Ascending aorta (tissue), 2 donors: ENCODE measurements at regions of chr18 and their contacts with region 1.

Region 1: GRCh38 chr18:13381944-13382365 is 163.4 kb downstream of the LDLRAD4 start:
- DNase-seq: peak; percentile 38 to 91
- H3K4me3 ChIP-seq: peak overlapping the region; percentile 35 to 55
- H3K27ac ChIP-seq: peak overlapping the region; percentile 95 to 96
- H3K4me1 ChIP-seq: peaks cover 15 to 52% of the 10 kb centered on the region in 2 donors
- H3K27me3 ChIP-seq: no peaks in the 10 kb centered on the region
- CTCF ChIP-seq: no peak

Region 2: GRCh38 chr18:13268158-13269012 is 113.6 kb before region 1 on chr18:
- intact Hi-C with region 1: loop called (anchors 2 kb)
- DNase-seq: peak in 1 of 2 donors; percentile 82
- H3K4me3 ChIP-seq: peak overlapping the region in 1 of 2 donors; percentile 4
- H3K27ac ChIP-seq: peak overlapping the region; percentile 71 to 72
- H3K4me1 ChIP-seq: peaks cover 48 to 64% of the 10 kb centered on the region in 2 donors
- H3K27me3 ChIP-seq: no peaks in the 10 kb centered on the region
- CTCF ChIP-seq: no peak

Region 3: DNA sequence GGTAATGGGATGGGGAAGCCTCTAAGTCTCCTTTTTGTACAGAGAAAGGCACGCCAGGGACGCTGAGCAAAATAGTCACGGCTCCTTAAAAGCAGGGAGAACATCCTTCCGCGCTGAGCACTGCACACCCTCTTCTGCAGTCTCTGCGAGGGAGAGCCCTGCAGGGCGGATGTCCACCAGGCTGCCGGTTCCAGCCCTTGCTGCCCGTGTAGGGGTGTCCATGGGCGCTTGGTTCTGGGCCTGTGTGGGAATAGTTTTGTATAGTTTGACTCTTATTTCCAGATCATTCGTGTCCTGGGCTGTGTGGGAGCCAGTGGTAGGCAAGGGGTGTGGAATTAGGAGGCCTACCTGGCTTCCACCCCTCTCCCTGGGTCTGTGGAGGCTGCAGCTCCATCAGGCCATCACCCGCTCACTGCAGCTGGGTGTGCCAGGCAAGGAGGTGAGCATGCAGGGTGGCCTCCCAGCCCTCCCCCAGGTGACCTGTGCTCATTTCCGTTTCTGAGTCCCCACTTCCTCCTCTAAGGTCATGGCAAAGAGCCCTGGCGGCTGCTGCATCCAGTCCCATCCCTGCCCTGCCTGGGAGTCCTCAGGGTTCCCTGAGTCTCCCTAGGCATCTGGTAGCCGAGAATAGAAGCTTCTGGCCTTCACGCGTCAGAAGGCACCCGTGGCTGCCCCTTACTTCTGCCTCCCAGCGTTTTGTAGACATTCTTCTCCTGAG is 39.2 kb after region 1 on chr18:
- intact Hi-C with region 1: loop called (anchors 2 kb)
- DNase-seq: peak in 1 of 2 donors; percentile 59
- H3K4me3 ChIP-seq: no peak overlapping the region
- H3K27ac ChIP-seq: peak overlapping the region; percentile 22 to 53
- H3K4me1 ChIP-seq: peaks cover 13 to 31% of the 10 kb centered on the region in 2 donors
- H3K27me3 ChIP-seq: no peaks in the 10 kb centered on the region
- CTCF ChIP-seq: no peak

Region 4: GRCh38 chr18:13435596-13436327 is 53.8 kb after region 1 on chr18:
- intact Hi-C with region 1: loop called (anchors 5 kb)
- DNase-seq: peak; percentile 57 to 90
- H3K4me3 ChIP-seq: no peak overlapping the region
- H3K27ac ChIP-seq: peak overlapping the region; percentile 86 to 91
- H3K4me1 ChIP-seq: peaks cover 3 to 50% of the 10 kb centered on the region in 2 donors
- H3K27me3 ChIP-seq: no peaks in the 10 kb centered on the region
- CTCF ChIP-seq: no peak